Lower leg skin (tissue), 4 donors: ENCODE measurements at regions of chr13 and their contacts with region 1.

Region 1: DNA sequence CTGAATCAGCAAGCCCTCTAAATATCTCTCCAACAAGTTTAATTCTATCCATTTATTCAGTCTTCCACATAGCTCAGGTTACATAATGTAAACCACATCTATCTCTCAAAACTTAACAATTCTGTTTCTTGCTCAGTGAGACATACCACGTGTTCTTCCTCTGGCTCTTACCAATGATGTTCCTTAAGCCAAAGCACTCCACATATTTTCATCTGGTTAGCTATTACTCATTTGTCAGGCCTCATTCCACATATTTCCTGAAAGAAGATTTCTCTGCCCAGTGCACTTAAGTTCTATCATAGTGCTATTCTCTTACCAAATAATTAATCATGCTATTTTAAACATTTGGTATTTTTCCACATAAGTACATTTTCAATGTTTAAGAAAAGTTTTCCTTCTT is 403.3 kb upstream of the ATXN8OS start:
- DNase-seq: no peak
- H3K4me3 ChIP-seq: no peak overlapping the region
- CTCF ChIP-seq: no peak
- POLR2A ChIP-seq: no peak

Region 2: DNA sequence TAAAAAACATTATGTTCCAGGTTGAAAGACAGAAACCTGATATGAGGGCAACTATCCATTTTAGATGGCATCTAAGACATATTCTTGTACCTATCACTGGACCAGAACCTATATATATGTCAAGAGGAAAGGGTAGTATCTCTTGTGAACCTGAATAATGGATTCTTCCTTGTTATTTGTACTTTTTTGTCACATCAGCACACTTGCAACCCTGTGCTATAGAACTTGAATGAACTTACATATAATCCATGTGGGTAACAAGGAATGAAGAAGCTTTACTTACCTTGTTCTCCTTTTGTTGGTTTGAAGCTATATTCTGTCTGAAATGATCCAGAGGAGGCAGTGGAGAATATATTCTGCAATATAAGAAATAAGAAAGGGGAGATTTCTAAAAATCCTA is 80.3 kb before region 1 on chr13:
- intact Hi-C with region 1: loop called (anchors 2 kb)
- DNase-seq: no peak
- H3K4me3 ChIP-seq: no peak overlapping the region
- CTCF ChIP-seq: no peak
- POLR2A ChIP-seq: no peak